Posterior cingulate gyrus (tissue), 11 donors: ENCODE measurements at regions of chr10 and their contacts with region 1.

Region 1: GRCh38 chr10:49115015-49115795 is at the start of gene VSTM4:
- DNase-seq: peak in 8 of 10 donors; percentile 29 to 92 (median 42)

Region 2: GRCh38 chr10:48656241-48656913 is 458.8 kb before region 1 on chr10:
- intact Hi-C with region 1: no loop called
- DNase-seq: peak; percentile 80 to 99 (median 90)

Region 3: DNA sequence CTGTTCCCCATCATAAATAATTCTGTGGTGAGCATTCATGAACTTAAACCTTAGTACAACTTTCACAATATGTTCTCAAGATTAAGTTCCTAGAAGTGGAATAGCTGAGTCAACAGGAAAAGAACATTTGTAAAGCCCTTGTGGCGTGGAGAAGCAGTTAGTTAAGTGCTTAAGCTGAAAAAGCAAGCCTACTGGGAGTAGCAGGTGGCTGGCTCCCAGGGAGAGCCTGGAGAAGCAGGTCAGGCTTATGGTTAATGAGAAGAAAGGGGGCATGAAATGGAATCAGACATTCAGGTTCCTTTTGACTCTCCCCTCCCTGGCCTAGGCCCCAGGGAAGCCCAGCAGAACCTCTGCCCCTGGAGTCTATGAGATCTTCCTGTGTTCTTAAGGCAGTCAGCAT is 35.1 kb before region 1 on chr10:
- intact Hi-C with region 1: loop called (anchors 5 kb)
- DNase-seq: no peak